Heart left ventricle (tissue), 16 donors: ENCODE measurements at regions of chr19 and their contacts with region 1.

Region 1: GRCh38 chr19:47428177-47428894 is 9.0 kb upstream of the MEIS3 start:
- DNase-seq: peak; percentile 84 to 90 (median 87)
- ATAC-seq: peak; percentile 72 to 94 (median 86)
- H3K4me3 ChIP-seq: peak overlapping the region in 2 of 12 donors; percentile 15 to 25
- H3K27ac ChIP-seq: peak overlapping the region in 1 of 12 donors; percentile 60
- H3K4me1 ChIP-seq: peaks cover 0 to 31% (median 15%) of the 10 kb centered on the region in 12 donors
- H3K27me3 ChIP-seq: peaks cover 9 to 77% (median 63%) of the 10 kb centered on the region in 9 donors
- CTCF ChIP-seq: no peak
- POLR2A ChIP-seq: no peak

Region 2: GRCh38 chr19:47296036-47296435 is 132.3 kb before region 1 on chr19:
- intact Hi-C with region 1: loop called in 3 of 10 experiments (anchors 1 to 10 kb)
- DNase-seq: peak in 4 of 5 donors; percentile 67 to 76 (median 72)
- ATAC-seq: peak in 3 of 4 donors; percentile 87 to 88 (median 88)
- H3K4me3 ChIP-seq: no peak overlapping the region
- H3K27ac ChIP-seq: no peak overlapping the region
- H3K4me1 ChIP-seq: no peaks in the 10 kb centered on the region
- H3K27me3 ChIP-seq: no peaks in the 10 kb centered on the region
- CTCF ChIP-seq: peak; percentile 66 to 79 (median 74)
- POLR2A ChIP-seq: no peak

Region 3: GRCh38 chr19:47370045-47370611 is 58.2 kb before region 1 on chr19:
- intact Hi-C with region 1: no loop called
- DNase-seq: peak in 1 of 5 donors; percentile 54
- ATAC-seq: peak in 3 of 4 donors; percentile 41 to 63 (median 49)
- H3K4me3 ChIP-seq: no peak overlapping the region
- H3K27ac ChIP-seq: peak overlapping the region in 1 of 12 donors; percentile 33
- H3K4me1 ChIP-seq: peaks cover 0 to 14% (median 0%) of the 10 kb centered on the region in 12 donors
- H3K27me3 ChIP-seq: no peaks in the 10 kb centered on the region
- CTCF ChIP-seq: no peak
- POLR2A ChIP-seq: no peak